ENCODE measurements at regions of chr17 and their contacts with region 1.

Region 1: DNA sequence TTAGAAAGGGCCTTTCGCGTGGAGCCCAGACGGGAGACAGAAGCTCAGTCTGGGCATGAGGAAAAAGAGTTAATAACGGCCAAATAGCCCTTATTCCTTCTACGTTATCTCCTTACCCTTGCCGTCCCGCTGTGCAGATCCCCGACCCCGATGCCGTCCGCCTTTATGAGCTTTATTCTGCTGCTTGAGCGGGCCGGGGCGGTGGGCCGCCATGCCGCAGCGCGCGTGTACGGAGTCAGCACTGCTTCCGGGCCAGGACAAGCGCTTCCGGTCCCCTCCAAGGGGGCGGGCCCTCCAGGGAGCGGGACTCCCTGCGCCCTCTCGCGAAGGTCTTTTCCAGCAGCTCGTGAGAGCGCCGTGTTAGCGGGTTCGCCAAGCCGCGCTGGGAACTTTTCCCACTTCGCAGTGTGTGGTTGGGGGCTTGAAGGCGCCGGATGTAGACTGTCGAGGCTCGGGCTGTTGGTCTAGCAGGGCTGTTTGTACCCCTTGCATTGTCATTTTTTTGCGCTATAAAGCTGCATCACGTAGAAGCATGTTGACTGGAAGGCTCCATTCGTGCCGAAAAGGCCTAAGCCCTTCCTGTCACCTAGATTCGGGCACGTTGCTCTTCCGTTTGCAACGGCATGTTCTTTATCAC is at the start of gene TSR1:
- DNase-seq: peak; percentile 79 to 89
- H3K4me3 ChIP-seq: peak within 1 kb of the TSS; percentile 90
- H3K27ac ChIP-seq: peak within 1 kb of the TSS; percentile 54
- H3K4me1 ChIP-seq: peaks cover 20% of the 10 kb centered on the region; the same call in 1 of the 2 replicates
- H3K27me3 ChIP-seq: no peaks in the 10 kb centered on the region
- CTCF ChIP-seq: 0 out of 2 replicates have a peak, but pooled peaks have one; percentile 14
- total RNA-seq, gene TSR1: 42.3 and 42.5 TPM in 2 replicates

Region 2: DNA sequence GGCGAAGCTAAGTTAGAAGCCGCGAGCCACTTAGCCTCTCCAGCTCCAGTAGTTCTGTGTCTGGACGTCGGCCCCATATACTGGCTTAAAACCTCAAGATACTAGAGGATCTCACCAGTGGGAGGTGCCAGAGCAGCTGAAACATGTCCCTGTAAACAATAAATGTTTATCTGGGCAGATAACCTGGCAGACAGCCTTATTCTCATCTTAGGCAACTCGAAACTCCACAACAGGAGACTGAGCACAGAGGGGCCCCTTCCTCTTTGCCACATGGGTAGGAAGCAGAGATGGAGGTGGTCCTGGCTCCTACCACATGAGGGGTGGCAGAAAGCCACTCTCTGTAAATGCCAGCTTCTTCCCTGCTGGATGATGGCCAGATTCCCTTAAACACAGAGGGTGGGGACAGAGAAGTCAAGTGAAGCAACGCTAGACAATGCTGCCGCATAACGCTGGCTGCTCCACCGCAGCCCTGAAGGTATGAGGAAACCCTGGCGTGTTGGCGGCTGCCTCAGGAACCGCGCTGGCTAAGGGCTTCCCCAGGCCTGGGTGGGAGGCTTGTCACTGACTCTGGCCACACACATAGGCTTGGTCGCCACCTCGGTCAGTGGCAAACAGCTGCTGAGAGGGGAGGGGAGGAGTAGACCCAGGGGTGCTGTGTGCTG is 213.6 kb before region 1 on chr17:
- CTCF ChIA-PET with region 1: no interaction called
- POLR2A ChIA-PET with region 1: no interaction called
- intact Hi-C with region 1: no loop called
- DNase-seq: peak in 1 of 2 experiments; percentile 87
- H3K4me3 ChIP-seq: no peak overlapping the region
- H3K27ac ChIP-seq: no peak overlapping the region
- H3K4me1 ChIP-seq: no peaks in the 10 kb centered on the region
- H3K27me3 ChIP-seq: no peaks in the 10 kb centered on the region
- CTCF ChIP-seq: no peak

Region 3: DNA sequence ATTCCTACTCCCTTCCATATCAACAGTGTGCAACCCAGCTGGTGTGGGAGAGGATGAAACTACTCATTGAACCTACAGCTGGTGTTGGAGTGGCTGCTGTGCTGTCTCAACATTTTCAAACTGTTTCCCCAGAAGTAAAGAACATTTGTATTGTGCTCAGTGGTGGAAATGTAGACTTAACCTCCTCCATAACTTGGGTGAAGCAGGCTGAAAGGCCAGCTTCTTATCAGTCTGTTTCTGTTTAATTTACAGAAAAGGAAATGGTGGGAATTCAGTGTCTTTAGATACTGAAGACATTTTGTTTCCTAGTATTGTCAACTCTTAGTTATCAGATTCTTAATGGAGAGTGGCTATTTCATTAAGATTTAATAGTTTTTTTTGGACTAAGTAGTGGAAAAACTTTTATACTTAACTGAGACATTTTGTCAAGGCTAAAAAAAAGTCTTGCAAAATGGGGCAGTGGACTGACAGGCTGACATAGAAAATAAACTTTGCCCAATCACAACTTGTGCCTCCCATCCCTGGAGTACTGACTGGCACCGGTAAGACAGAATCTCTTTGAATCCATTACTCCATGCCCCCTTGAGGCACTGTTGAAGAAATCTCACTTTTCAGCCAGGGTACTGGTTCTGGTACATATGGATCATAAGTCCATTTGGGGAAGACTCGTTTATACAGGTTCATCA is 12.6 kb before region 1 on chr17:
- CTCF ChIA-PET with region 1: no interaction called
- POLR2A ChIA-PET with region 1: interaction called, 18 read pairs
- intact Hi-C with region 1: no loop called
- DNase-seq: no peak
- H3K4me3 ChIP-seq: no peak overlapping the region
- H3K27ac ChIP-seq: no peak overlapping the region
- H3K4me1 ChIP-seq: no peaks in the 10 kb centered on the region
- H3K27me3 ChIP-seq: no peaks in the 10 kb centered on the region
- CTCF ChIP-seq: no peak

Region 4: DNA sequence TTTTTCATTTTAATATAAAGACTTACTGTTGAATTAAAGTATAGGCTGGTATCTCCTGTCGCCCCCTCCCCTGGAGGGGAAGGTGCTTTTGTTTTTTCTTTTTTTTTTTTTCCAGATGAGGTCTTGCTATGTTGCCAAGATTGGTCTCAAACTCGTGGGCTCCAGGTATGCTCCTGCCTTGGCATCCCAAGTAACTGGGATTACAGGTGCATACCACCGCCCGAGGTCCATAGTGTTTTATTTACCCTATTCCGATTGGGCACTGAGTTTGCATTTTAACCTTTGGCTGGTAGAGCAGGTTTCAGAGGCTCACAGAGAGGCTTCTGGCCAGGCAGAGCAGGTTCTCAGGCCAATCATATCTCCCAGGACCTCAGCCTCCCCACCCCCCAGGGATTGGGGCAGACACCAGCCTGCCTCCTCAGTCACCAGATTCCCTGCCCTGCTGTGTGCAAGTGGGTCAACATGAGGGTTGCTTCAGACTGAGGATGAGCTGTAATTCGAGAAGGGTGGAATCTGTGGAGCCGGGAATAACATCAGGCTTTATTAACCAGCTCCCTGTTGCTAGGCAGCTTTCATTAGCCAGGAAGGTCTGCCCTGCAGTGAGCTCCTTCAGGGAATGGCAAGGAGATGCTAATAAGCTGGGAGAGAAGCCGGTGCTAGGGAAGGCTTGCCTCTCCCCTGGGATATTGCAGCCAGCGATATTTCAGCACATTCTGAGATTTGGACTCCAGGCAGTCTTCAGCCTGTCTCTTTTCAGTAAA is 11.4 kb after region 1 on chr17:
- CTCF ChIA-PET with region 1: interaction called, 33 read pairs
- POLR2A ChIA-PET with region 1: interaction called, 11 read pairs
- intact Hi-C with region 1: loop called (anchors 1 kb)
- DNase-seq: peak; percentile 93 to 95
- H3K4me3 ChIP-seq: no peak overlapping the region; the same call in 1 of the 2 replicates
- H3K27ac ChIP-seq: peak overlapping the region; percentile 77
- H3K4me1 ChIP-seq: peaks cover 34% of the 10 kb centered on the region
- H3K27me3 ChIP-seq: no peaks in the 10 kb centered on the region
- CTCF ChIP-seq: no peak

Region 5: GRCh38 chr17:2363851-2364762 is 27.8 kb after region 1 on chr17:
- CTCF ChIA-PET with region 1: interaction called, 8 read pairs
- POLR2A ChIA-PET with region 1: interaction called, 4 read pairs
- intact Hi-C with region 1: loop called (anchors 1 kb)
- DNase-seq: no peak
- H3K4me3 ChIP-seq: no peak overlapping the region
- H3K27ac ChIP-seq: no peak overlapping the region
- H3K4me1 ChIP-seq: peaks cover 26% of the 10 kb centered on the region
- H3K27me3 ChIP-seq: no peaks in the 10 kb centered on the region
- CTCF ChIP-seq: no peak

Measured in PC-9 (cell line).